ENCODE measurements at regions of chr1 and their contacts with region 1.

Region 1: DNA sequence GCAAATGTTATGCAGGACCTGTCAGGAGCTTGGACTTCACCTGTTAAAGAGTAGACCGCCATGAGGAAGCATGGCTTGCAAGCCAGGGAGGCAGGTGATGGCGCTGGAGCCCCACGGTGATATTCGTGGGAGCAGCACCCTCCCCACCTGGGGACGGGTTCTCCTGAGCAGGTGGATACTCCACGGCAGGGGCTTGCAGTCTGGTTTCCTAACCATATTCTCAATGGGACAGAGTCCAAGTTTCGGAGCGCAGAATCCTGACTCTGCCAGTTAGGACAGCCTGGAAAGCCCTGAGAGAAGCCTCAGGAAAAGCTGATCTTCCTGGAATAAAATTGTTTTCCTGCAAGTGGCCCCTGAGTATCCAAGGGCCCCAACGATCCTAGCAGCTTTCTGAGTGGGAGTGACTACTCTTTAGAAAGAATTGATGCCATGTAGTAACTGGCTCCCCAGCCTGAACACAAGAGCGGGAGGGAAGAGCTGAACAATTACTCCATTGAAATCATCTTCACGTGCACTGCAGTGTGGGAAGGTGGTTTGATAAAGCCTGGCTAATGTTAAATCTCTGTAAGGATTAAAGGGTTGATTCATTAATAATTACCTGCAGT is 146.3 kb upstream of the RAB4A start:
- DNase-seq: no peak
- H3K4me3 ChIP-seq: no peak overlapping the region
- CTCF ChIP-seq: no peak
- POLR2A ChIP-seq: no peak

Region 2: GRCh38 chr1:229209816-229210215 is 85.2 kb after region 1 on chr1:
- intact Hi-C with region 1: no loop called
- DNase-seq: no peak
- H3K4me3 ChIP-seq: no peak overlapping the region
- CTCF ChIP-seq: no peak
- POLR2A ChIP-seq: no peak

Region 3: DNA sequence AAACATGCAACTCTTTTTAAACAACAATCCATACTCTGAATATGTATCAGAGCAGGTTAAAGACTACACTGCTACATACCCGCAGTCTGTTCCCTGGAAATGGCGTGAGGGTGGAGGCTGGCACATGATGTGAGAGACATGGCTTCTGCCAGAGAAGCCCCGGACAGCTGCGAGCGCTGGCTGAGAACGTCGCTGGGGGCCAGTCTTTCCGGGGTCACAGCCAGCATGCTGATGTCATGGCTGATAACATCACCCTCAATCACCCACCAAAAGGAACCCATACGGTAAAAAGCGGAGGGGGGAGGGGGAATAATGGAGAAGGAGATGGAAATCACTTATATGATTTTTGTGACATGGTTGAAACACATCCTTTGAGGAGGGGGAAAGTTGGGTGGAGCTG is 1714.6 kb after region 1 on chr1:
- intact Hi-C with region 1: loop called (anchors 5 kb)
- DNase-seq: no peak
- H3K4me3 ChIP-seq: no peak overlapping the region
- CTCF ChIP-seq: no peak
- POLR2A ChIP-seq: no peak